ENCODE measurements at regions of chr7 and their contacts with region 1.

Region 1: GRCh38 chr7:94301024-94301586 is 93.6 kb upstream of the COL1A2 start:
- DNase-seq: peak; percentile 79 to 88
- H3K4me3 ChIP-seq: no peak overlapping the region
- H3K4me3 Mint-ChIP-seq: peak overlapping the region; percentile 32
- H3K27ac Mint-ChIP-seq: peak overlapping the region; percentile 90
- H3K4me1 ChIP-seq: peaks cover 43% of the 10 kb centered on the region
- H3K4me1 Mint-ChIP-seq: peaks cover 31% of the 10 kb centered on the region
- H3K27me3 ChIP-seq: no peaks in the 10 kb centered on the region
- H3K27me3 Mint-ChIP-seq: no peaks in the 10 kb centered on the region
- CTCF ChIP-seq: peak in 1 of 2 experiments; percentile 19

Region 2: DNA sequence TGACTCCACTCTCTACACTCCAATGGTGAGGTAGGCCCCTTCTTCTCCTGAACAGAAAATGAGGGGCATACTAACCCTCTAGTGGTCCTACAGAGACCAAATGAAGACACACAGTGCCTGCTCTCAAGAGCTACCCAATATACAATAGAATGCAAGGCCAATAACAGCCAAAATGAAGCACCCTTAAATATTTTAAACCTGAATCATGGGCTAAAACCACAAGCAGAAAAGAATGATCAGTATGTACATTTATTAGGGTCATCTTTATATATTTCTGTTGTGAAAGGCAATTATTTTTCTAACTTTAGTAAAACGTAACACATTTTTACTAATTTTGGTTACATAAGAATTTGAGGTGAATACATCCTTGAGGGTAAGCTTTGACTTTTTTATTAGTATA is 43.7 kb after region 1 on chr7:
- CTCF ChIA-PET with region 1: no interaction called
- POLR2A ChIA-PET with region 1: no interaction called
- intact Hi-C with region 1: loop called (anchors 5 kb)
- DNase-seq: no peak
- H3K4me3 ChIP-seq: no peak overlapping the region
- H3K4me3 Mint-ChIP-seq: no peak overlapping the region
- H3K27ac Mint-ChIP-seq: no peak overlapping the region
- H3K4me1 ChIP-seq: no peaks in the 10 kb centered on the region
- H3K4me1 Mint-ChIP-seq: no peaks in the 10 kb centered on the region
- H3K27me3 ChIP-seq: no peaks in the 10 kb centered on the region; the same call in 1 of the 2 replicates
- H3K27me3 Mint-ChIP-seq: peaks cover 3% of the 10 kb centered on the region
- CTCF ChIP-seq: no peak

Region 3: GRCh38 chr7:94395141-94396036 is 94.3 kb after region 1 on chr7:
- CTCF ChIA-PET with region 1: interaction called, 56 read pairs
- POLR2A ChIA-PET with region 1: no interaction called
- intact Hi-C with region 1: loop called (anchors 1 kb)
- DNase-seq: peak; percentile 59 to 64
- H3K4me3 ChIP-seq: no peak overlapping the region
- H3K4me3 Mint-ChIP-seq: peak overlapping the region; percentile 59
- H3K27ac Mint-ChIP-seq: no peak overlapping the region
- H3K4me1 ChIP-seq: peaks cover 11% of the 10 kb centered on the region
- H3K4me1 Mint-ChIP-seq: peaks cover 6% of the 10 kb centered on the region
- H3K27me3 ChIP-seq: no peaks in the 10 kb centered on the region
- H3K27me3 Mint-ChIP-seq: no peaks in the 10 kb centered on the region
- CTCF ChIP-seq: peak; percentile 74 to 79

Measured in Caco-2 (cell line).